Lower leg skin (tissue), 4 donors: ENCODE measurements at regions of chr2 and their contacts with region 1.

Region 1: DNA sequence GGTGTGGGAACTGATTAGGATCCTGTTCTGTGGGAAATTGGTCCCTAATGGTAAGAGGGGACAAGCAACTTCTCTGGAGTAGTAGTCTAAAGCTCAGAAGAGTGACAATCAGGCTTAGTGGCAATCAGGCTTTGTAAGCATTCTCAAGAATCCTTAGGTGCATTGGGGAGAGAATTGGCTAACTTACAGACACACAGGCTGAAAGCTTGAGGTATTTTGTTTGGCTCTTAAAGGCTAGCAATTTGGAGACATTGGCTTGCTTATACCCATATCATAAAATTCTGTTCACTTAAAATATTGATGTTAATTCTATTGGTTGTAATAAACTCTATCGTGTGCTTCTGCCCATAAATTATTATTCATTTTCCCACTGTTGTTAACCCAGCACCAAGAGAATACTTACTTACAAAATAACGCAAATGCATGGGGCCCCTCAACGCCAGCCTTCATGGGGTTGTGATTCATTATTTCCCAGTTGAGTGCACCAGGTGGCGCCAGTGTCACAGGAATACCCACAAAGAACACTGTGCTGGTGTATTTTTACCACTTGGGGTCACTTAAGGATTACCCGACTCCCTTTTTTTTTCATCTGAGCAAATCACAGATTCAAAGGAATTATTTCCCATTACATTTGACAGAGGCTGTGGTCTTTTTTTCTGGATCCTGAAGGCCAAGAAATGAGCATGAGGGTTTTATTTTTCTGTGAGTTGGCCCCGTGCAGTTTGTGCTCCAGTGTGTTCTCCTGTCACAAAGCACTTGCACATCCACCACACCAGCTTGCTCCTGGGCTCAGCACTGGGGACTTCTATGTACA is 45.5 kb downstream of the DDX1 start:
- DNase-seq: peak; percentile 50 to 93
- H3K4me3 ChIP-seq: no peak overlapping the region
- CTCF ChIP-seq: peak in 1 of 3 donors; percentile 53
- POLR2A ChIP-seq: no peak

Region 2: GRCh38 chr2:15677141-15677843 is 40.1 kb after region 1 on chr2:
- intact Hi-C with region 1: no loop called
- DNase-seq: peak in 1 of 2 donors; percentile 83
- H3K4me3 ChIP-seq: no peak overlapping the region
- CTCF ChIP-seq: no peak
- POLR2A ChIP-seq: no peak

Region 3: DNA sequence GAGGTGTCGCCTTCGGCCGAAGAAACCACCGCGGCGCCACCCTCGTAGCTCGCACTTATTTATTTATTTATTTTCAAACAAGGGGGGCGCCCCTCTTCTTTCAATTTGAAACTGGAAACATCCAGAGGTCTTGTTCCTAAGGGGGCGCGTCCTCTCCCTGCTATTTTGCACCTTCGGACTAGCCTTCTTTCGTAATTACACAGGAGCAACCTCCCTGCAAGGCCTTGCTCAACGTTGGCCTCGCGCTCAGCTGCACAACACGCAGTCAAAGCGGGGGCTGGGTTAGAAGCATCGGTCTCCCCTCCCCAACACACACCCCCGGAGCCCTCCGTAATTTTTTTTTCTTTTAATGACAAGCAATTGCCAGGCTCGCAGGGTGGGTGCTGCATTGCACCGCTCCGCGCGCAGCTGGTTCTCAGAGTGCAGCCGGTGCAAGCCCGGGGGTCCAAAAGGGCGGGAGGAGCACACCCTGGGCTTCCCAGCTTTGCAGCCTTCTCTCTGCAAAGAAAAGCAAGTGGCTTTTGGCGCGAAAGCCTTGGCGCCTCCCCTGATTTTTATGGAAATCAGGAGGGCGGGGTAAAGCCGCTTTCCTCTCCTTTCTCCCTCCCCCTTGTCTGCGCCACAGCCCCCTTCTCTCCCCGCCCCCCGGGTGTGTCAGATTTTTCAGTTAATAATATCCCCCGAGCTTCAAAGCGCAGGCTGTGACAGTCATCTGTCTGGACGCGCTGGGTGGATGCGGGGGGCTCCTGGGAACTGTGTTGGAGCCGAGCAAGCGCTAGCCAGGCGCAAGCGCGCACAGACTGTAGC is 302.9 kb after region 1 on chr2 and contains the start of gene MYCN:
- intact Hi-C with region 1: loop called (anchors 10 kb)
- DNase-seq: peak in 1 of 2 donors; percentile 79
- H3K4me3 ChIP-seq: no peak within 1 kb of the TSS
- CTCF ChIP-seq: no peak
- POLR2A ChIP-seq: no peak
- total RNA-seq, gene MYCN: 0.15 to 1.5 (median 0.64) TPM in 3 of 4 donors, not detected in the other

Region 4: GRCh38 chr2:16613539-16614011 is 976.4 kb after region 1 on chr2:
- intact Hi-C with region 1: loop called (anchors 10 kb)
- DNase-seq: no peak
- H3K4me3 ChIP-seq: no peak overlapping the region
- CTCF ChIP-seq: no peak
- POLR2A ChIP-seq: no peak

Region 5: GRCh38 chr2:16763493-16763899 is 1126.3 kb after region 1 on chr2:
- intact Hi-C with region 1: loop called (anchors 10 kb)
- DNase-seq: no peak
- H3K4me3 ChIP-seq: no peak overlapping the region
- CTCF ChIP-seq: no peak
- POLR2A ChIP-seq: no peak